ENCODE measurements at regions of chr1 and their contacts with region 1.

Region 1: DNA sequence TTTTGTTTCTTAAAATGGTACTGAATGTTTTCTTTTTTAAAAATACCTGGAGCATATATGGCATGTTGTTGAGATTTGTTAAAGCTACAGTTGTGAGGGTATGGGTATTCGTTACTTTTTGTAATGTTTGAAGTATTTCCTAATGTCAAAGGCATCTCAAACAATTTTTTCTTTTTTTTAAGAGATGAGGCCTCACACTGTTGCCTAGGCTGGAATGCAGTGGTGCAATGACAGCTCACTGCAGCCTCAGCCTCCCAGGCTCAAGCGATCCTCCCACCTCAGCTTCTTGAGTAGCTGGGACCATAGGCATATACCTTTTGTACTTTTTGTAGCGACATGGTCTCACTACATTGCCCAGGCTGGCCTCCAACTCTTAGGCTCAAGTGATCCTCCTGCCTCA is 16.1 kb downstream of the CLCN6 start:
- DNase-seq: no peak
- H3K4me3 ChIP-seq: no peak overlapping the region
- H3K4me3 Mint-ChIP-seq: no peak overlapping the region
- H3K27ac ChIP-seq: peak overlapping the region in 1 of 2 donors; percentile 55
- H3K27ac Mint-ChIP-seq: peak overlapping the region in 1 of 7 donors; percentile 5
- H3K4me1 ChIP-seq: no peaks in the 10 kb centered on the region
- H3K4me1 Mint-ChIP-seq: no peaks in the 10 kb centered on the region
- H3K27me3 ChIP-seq: no peaks in the 10 kb centered on the region
- H3K27me3 Mint-ChIP-seq: peaks cover 0 to 5% (median 0%) of the 10 kb centered on the region in 3 donors
- CTCF ChIP-seq: no peak

Region 2: DNA sequence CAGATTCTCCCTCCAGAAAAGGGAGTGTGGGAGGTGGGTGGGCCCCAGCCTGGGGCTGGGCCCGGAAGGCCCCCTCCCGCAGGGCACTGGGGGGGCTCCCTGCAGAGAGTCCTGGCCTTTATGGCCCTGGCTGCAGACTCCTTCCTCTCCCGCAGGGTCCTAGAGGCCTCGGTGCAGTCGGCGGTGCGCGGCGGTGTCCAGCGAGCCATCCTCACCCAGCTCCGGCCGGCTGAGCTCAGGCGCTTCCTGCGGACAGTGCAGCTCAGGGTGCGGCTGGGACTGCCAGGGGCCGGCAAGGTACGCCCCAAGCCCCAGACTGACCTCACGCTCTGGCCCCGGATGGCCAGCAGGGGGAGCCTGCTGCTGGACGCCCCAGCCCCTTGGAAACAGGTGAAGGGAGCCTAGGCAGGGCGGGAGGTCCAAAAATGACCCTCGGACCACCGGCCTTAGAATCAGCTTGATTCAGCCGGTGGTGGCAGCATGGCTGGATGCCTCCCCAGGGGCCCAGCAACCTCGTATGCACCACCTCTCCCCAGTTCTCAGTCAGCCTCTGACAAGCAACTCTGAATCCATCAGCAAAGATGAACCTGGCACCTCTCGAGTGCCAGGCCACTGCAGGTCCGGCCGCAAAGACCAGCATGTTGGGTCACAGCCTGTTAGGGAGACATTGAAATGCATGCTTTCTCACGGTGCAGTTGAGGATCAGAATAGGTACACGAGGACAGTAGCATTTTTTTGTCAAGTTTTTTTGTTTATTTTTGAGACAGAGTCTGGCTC is 36.9 kb before region 1 on chr1:
- intact Hi-C with region 1: loop called in 1 of 2 experiments (anchors 5 kb)
- DNase-seq: peak; percentile 55 to 68 (median 66)
- H3K4me3 ChIP-seq: peak overlapping the region in 1 of 3 experiments; percentile 65
- H3K4me3 Mint-ChIP-seq: peak overlapping the region; percentile 49 to 73
- H3K27ac ChIP-seq: no peak overlapping the region
- H3K27ac Mint-ChIP-seq: peak overlapping the region in 3 of 7 donors; percentile 36 to 45 (median 43)
- H3K4me1 ChIP-seq: peaks cover 19 to 29% of the 10 kb centered on the region in 2 donors
- H3K4me1 Mint-ChIP-seq: peaks cover 28% of the 10 kb centered on the region
- H3K27me3 ChIP-seq: no peaks in the 10 kb centered on the region
- H3K27me3 Mint-ChIP-seq: peaks cover 2 to 13% (median 5%) of the 10 kb centered on the region in 3 donors
- CTCF ChIP-seq: peak; percentile 92

Region 3: GRCh38 chr1:11805447-11806306 is 16.4 kb before region 1 on chr1 and contains the starts of genes CLCN6 and MTHFR:
- intact Hi-C with region 1: loop called in 1 of 2 experiments (anchors 2 kb)
- DNase-seq: peak; percentile 99
- H3K4me3 ChIP-seq: peak within 1 kb of the TSS; percentile 72 to 84 (median 83)
- H3K4me3 Mint-ChIP-seq: peak within 1 kb of the TSS; percentile 94 to 99
- H3K27ac ChIP-seq: peak within 1 kb of the TSS; percentile 87 to 98
- H3K27ac Mint-ChIP-seq: peak within 1 kb of the TSS; percentile 99 to 100 (median 99)
- H3K4me1 ChIP-seq: peaks cover 54 to 66% of the 10 kb centered on the region in 2 donors
- H3K4me1 Mint-ChIP-seq: peaks cover 71% of the 10 kb centered on the region
- H3K27me3 ChIP-seq: no peaks in the 10 kb centered on the region
- H3K27me3 Mint-ChIP-seq: peaks cover 0 to 2% (median 1%) of the 10 kb centered on the region in 3 donors
- CTCF ChIP-seq: no peak
- polyA plus RNA-seq, gene CLCN6: 3.8 to 37.1 (median 4.2) TPM
- polyA plus RNA-seq, gene MTHFR: 4.5 to 41.9 (median 8.5) TPM

Region 4: GRCh38 chr1:11873395-11874257 is 51.5 kb after region 1 on chr1:
- intact Hi-C with region 1: no loop called
- DNase-seq: no peak
- H3K4me3 ChIP-seq: no peak overlapping the region
- H3K4me3 Mint-ChIP-seq: no peak overlapping the region
- H3K27ac ChIP-seq: no peak overlapping the region
- H3K27ac Mint-ChIP-seq: no peak overlapping the region
- H3K4me1 ChIP-seq: no peaks in the 10 kb centered on the region
- H3K4me1 Mint-ChIP-seq: no peaks in the 10 kb centered on the region
- H3K27me3 ChIP-seq: no peaks in the 10 kb centered on the region
- H3K27me3 Mint-ChIP-seq: peaks cover 7 to 11% (median 9%) of the 10 kb centered on the region in 3 donors
- CTCF ChIP-seq: no peak